ENCODE measurements at regions of chr2 and their contacts with region 1.

Region 1: DNA sequence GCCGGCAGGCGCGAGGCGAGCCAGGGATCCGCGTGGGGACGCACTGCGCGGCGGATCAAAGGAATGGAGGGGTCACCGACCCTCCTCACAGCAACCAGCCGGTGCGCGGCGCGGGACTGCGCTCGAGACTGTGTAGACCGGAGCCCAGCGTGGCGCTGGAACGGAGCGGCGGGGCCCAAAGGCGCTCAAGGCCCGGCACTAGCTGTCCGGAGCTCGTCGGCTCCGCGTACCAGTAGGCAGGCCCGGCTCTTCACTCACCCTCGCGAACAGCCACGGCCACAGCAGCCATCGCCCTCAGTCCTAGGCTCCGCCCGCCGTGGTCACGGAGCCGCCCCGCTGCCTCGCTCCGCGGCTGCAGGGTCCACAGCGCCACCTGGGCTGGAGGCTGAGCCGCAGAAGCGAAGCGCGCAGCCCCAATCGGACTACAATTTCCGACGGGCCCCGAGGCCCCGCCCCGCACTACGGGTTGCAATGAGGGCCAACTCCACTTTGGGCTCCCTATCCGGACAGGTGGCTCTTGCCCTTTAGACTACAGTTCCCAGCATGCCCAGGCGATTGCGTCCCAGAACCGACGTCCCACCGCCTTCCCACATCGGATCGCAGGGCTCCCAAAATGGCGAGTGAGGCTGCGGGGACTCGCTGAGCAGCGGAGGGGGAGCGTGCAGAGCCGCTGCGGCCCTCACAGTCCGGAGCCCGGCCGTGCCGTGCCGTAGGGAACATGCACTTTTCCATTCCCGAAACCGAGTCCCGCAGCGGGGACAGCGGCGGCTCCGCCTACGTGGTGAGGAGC is at the starts of genes EIF2B4 and SNX17:
- DNase-seq: peak; percentile 99
- ATAC-seq: peak; percentile 92 to 93
- H3K4me3 ChIP-seq: peak within 1 kb of the TSS; percentile 96 to 100 (median 98)
- H3K27ac ChIP-seq: peak within 1 kb of the TSS; percentile 94 to 98 (median 96)
- H3K4me1 ChIP-seq: peaks cover 28 to 35% of the 10 kb centered on the region in 2 donors
- H3K27me3 ChIP-seq: no peaks in the 10 kb centered on the region
- CTCF ChIP-seq: peak; percentile 53 to 81 (median 74)
- POLR2A ChIP-seq: peak; percentile 68 to 81
- total RNA-seq, gene EIF2B4: 50.5 to 57.9 (median 53.8) TPM
- total RNA-seq, gene SNX17: 47.2 to 91.5 (median 56.3) TPM

Region 2: GRCh38 chr2:27356382-27357181 is 13.6 kb before region 1 on chr2 and contains the start of gene GTF3C2:
- in situ Hi-C with region 1: no loop called
- intact Hi-C with region 1: loop called (anchors 1 kb)
- DNase-seq: peak; percentile 90 to 95
- ATAC-seq: peak; percentile 82 to 88
- H3K4me3 ChIP-seq: peak within 1 kb of the TSS; percentile 69 to 98 (median 93)
- H3K27ac ChIP-seq: peak within 1 kb of the TSS; percentile 92 to 99 (median 94)
- H3K4me1 ChIP-seq: peaks cover 42 to 50% of the 10 kb centered on the region in 2 donors
- H3K27me3 ChIP-seq: no peaks in the 10 kb centered on the region
- CTCF ChIP-seq: peak in 2 of 5 experiments; percentile 26 to 46
- POLR2A ChIP-seq: peak; percentile 50
- total RNA-seq, gene GTF3C2: 25.3 to 45.6 (median 40.5) TPM

Region 3: DNA sequence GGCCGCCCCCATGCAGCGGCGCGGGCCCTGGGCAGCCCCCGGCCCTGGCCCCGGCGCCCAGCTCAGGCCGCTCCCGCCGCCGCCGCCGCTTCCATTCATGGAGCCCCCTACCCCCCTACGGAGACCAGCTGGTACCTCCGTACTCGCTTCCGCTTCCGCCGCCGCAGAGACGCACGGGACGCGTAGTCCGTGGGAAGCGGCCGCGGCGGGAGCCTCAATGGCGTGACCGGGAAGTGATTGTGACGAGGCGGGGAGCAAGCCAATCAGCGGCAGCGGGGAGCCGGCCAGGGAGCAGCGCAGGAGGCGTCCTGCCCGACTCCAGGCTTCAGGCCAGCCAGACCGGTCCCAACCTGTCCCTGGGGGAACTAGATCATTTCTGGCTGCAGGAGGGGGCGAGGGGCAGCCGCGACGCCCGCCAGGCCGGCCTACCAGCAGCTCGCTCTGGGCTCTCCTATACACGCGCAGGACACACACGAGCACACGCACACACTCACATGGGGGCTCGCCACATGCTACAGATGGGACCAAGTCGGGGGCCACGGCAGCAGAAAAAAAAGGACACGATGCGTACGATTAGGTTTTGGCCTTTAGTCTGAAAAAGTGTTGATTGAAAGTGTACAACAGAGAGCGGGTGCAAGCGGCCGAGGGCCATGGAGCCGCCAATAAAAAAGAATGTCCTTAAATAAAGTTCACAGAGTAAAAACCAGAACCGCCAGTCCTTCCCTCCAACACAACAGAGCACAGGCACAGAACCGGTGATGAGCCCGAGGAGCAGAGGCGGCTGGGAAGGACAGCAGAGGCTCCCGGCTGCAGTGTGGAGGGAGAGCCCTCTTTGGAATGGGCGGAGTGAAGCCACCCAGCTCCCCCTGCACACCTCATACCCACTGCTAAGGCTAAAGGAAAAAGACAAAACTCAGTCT is 10.7 kb after region 1 on chr2 and contains the start of gene ZNF513:
- in situ Hi-C with region 1: no loop called
- intact Hi-C with region 1: loop called (anchors 1 kb)
- DNase-seq: peak; percentile 96 to 97
- ATAC-seq: peak; percentile 95
- H3K4me3 ChIP-seq: peak within 1 kb of the TSS; percentile 59 to 77 (median 70)
- H3K27ac ChIP-seq: peak within 1 kb of the TSS; percentile 84 to 91 (median 88)
- H3K4me1 ChIP-seq: peaks cover 18 to 19% of the 10 kb centered on the region in 2 donors
- H3K27me3 ChIP-seq: no peaks in the 10 kb centered on the region
- CTCF ChIP-seq: no peak
- POLR2A ChIP-seq: peak; percentile 63 to 68
- total RNA-seq, gene ZNF513: 2.0 to 7.6 (median 4.5) TPM

Region 4: GRCh38 chr2:27573452-27573851 is 203.2 kb after region 1 on chr2:
- in situ Hi-C with region 1: no loop called
- intact Hi-C with region 1: no loop called
- DNase-seq: no peak
- ATAC-seq: no peak
- H3K4me3 ChIP-seq: no peak overlapping the region
- H3K27ac ChIP-seq: no peak overlapping the region
- H3K4me1 ChIP-seq: no peaks in the 10 kb centered on the region
- H3K27me3 ChIP-seq: no peaks in the 10 kb centered on the region
- CTCF ChIP-seq: no peak
- POLR2A ChIP-seq: no peak

Measured in gastrocnemius medialis (tissue), 4 donors.